K562 (cell line): ENCODE measurements at regions of chr5 and their contacts with region 1.

Region 1: GRCh38 chr5:119302916-119303897 is 52.6 kb upstream of the TNFAIP8 start:
- DNase-seq: peak in 1 of 4 experiments; percentile 35
- ATAC-seq: peak; percentile 72
- H3K4me3 ChIP-seq: no peak overlapping the region
- H3K27ac ChIP-seq: peak overlapping the region; percentile 53; the same call in 2 of the 3 replicates
- H3K4me1 ChIP-seq: peaks cover 9 to 50% of the 10 kb centered on the region in 2 experiments
- H3K27me3 ChIP-seq: no peaks in the 10 kb centered on the region
- CTCF ChIP-seq: no peak
- EP300 ChIP-seq: no peak
- POLR2A ChIP-seq: no peak
- RAD21 ChIP-seq: no peak

Region 2: GRCh38 chr5:118956727-118957126 is 346.5 kb before region 1 on chr5:
- CTCF ChIA-PET with region 1: no interaction called
- POLR2A ChIA-PET with region 1: no interaction called
- in situ Hi-C with region 1: no loop called
- intact Hi-C with region 1: no loop called
- DNase-seq: peak in 1 of 4 experiments; percentile 11
- ATAC-seq: no peak
- H3K4me3 ChIP-seq: no peak overlapping the region
- H3K27ac ChIP-seq: no peak overlapping the region
- H3K4me1 ChIP-seq: no peaks in the 10 kb centered on the region; a peak in 1 of 5 replicates
- H3K27me3 ChIP-seq: no peaks in the 10 kb centered on the region
- CTCF ChIP-seq: peak in 2 of 3 experiments; percentile 23 to 67; a peak in 3 of 6 replicates
- EP300 ChIP-seq: no peak
- POLR2A ChIP-seq: no peak
- RAD21 ChIP-seq: peak; percentile 77 to 87

Region 3: DNA sequence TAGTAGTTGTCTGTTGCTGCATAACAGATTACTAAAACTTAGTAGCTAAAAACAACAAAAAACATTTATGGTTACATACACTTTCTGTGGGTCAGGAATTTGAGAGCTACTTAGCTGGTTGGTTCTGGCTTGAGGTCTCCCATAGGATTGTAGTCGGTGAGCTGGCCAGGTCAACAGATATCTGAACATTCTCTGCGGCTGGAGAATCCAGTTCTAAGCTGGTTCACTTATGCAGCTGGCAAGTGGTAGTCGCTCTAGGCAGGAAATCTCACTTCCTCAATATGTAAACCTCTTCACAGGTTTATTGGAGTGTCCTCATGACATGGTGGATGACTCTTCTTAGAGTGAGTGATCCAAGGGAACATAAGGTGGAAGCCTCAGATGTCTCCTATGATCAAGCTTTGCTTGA is 13.0 kb before region 1 on chr5:
- CTCF ChIA-PET with region 1: no interaction called
- POLR2A ChIA-PET with region 1: interaction called, 11 read pairs
- in situ Hi-C with region 1: no loop called
- intact Hi-C with region 1: no loop called
- DNase-seq: no peak
- ATAC-seq: peak; percentile 55
- H3K4me3 ChIP-seq: no peak overlapping the region
- H3K27ac ChIP-seq: no peak overlapping the region
- H3K4me1 ChIP-seq: peaks cover 12 to 57% of the 10 kb centered on the region in 2 experiments
- H3K27me3 ChIP-seq: no peaks in the 10 kb centered on the region
- CTCF ChIP-seq: no peak
- EP300 ChIP-seq: no peak
- POLR2A ChIP-seq: no peak
- RAD21 ChIP-seq: no peak

Region 4: GRCh38 chr5:119315516-119315949 is 12.3 kb after region 1 on chr5:
- CTCF ChIA-PET with region 1: no interaction called
- POLR2A ChIA-PET with region 1: interaction called, 11 read pairs
- in situ Hi-C with region 1: no loop called
- intact Hi-C with region 1: no loop called
- DNase-seq: peak; percentile 61 to 80 (median 70)
- ATAC-seq: peak; percentile 77
- H3K4me3 ChIP-seq: no peak overlapping the region
- H3K27ac ChIP-seq: peak overlapping the region; percentile 37; the same call in 1 of the 3 replicates
- H3K4me1 ChIP-seq: peaks cover 11 to 44% of the 10 kb centered on the region in 2 experiments
- H3K27me3 ChIP-seq: no peaks in the 10 kb centered on the region
- CTCF ChIP-seq: peak; percentile 49 to 67 (median 56); a peak in 5 of 6 replicates
- EP300 ChIP-seq: peak; percentile 32; the same call in 1 of the 2 replicates
- POLR2A ChIP-seq: no peak
- RAD21 ChIP-seq: peak; percentile 57 to 65

Region 5: GRCh38 chr5:119322948-119323537 is 19.8 kb after region 1 on chr5:
- CTCF ChIA-PET with region 1: no interaction called
- POLR2A ChIA-PET with region 1: interaction called, 14 read pairs
- in situ Hi-C with region 1: no loop called
- intact Hi-C with region 1: loop called (anchors 1 kb)
- DNase-seq: peak in 2 of 4 experiments; percentile 48 to 60
- ATAC-seq: peak; percentile 42
- H3K4me3 ChIP-seq: peak overlapping the region; percentile 30
- H3K27ac ChIP-seq: peak overlapping the region; percentile 92
- H3K4me1 ChIP-seq: peaks cover 57 to 78% of the 10 kb centered on the region in 2 experiments
- H3K27me3 ChIP-seq: no peaks in the 10 kb centered on the region
- CTCF ChIP-seq: no peak
- EP300 ChIP-seq: peak; percentile 41; the same call in 1 of the 2 replicates
- POLR2A ChIP-seq: no peak
- RAD21 ChIP-seq: peak in 1 of 2 experiments; percentile 16; a peak in 1 of 4 replicates

Region 6: GRCh38 chr5:119332978-119333401 is 29.8 kb after region 1 on chr5:
- CTCF ChIA-PET with region 1: no interaction called
- POLR2A ChIA-PET with region 1: interaction called, 5 read pairs
- in situ Hi-C with region 1: no loop called
- intact Hi-C with region 1: loop called (anchors 2 kb)
- DNase-seq: no peak
- ATAC-seq: no peak
- H3K4me3 ChIP-seq: no peak overlapping the region
- H3K27ac ChIP-seq: peak overlapping the region; percentile 49; the same call in 2 of the 3 replicates
- H3K4me1 ChIP-seq: peaks cover 29 to 90% of the 10 kb centered on the region in 2 experiments; a peak in 4 of 5 replicates
- H3K27me3 ChIP-seq: no peaks in the 10 kb centered on the region
- CTCF ChIP-seq: no peak
- EP300 ChIP-seq: no peak
- POLR2A ChIP-seq: no peak
- RAD21 ChIP-seq: no peak

Region 7: DNA sequence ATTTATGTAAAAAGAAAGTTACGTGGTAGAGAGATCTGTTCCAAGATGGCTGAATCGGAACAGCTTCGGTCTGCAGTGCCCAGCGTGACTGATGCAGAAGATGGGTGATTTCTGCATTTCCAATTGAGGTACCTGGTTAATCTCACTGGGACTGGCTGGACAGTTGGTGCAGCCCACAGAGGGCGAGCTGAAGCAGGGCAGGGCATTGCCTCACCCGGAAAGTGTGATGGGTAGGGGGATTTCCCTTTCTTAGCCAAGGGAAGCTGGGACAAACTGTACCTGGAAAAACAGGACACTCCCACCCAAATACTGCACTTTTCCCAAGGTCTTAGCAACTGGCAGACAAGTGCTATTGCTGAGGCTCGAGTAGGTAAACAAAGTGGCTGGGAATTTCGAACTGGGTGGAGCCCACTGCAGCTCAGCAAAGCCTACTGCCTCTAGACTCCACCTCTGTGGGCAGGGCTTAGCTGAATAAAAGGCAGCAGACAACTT is 136.0 kb after region 1 on chr5:
- CTCF ChIA-PET with region 1: no interaction called
- POLR2A ChIA-PET with region 1: no interaction called
- in situ Hi-C with region 1: no loop called
- intact Hi-C with region 1: no loop called
- DNase-seq: peak in 1 of 4 experiments; percentile 32
- ATAC-seq: peak; percentile 74
- H3K4me3 ChIP-seq: peak overlapping the region; percentile 29
- H3K27ac ChIP-seq: peak overlapping the region; percentile 50; the same call in 2 of the 3 replicates
- H3K4me1 ChIP-seq: peaks cover 0 to 15% of the 10 kb centered on the region in 2 experiments; a peak in 4 of 5 replicates
- H3K27me3 ChIP-seq: no peaks in the 10 kb centered on the region
- CTCF ChIP-seq: no peak
- EP300 ChIP-seq: no peak
- POLR2A ChIP-seq: no peak
- RAD21 ChIP-seq: no peak